Gastrocnemius medialis (tissue), 4 donors: ENCODE measurements at regions of chr3 and their contacts with region 1.

Region 1: GRCh38 chr3:11155341-11156025 is 1.2 kb downstream of the HRH1 start:
- DNase-seq: peak; percentile 19 to 48
- ATAC-seq: peak; percentile 68 to 80
- H3K4me3 ChIP-seq: peak overlapping the region; percentile 39 to 55 (median 51)
- H3K27ac ChIP-seq: peak overlapping the region in 1 of 4 donors; percentile 40
- H3K4me1 ChIP-seq: peaks cover 7 to 10% of the 10 kb centered on the region in 2 donors
- H3K27me3 ChIP-seq: peaks cover 23 to 33% (median 29%) of the 10 kb centered on the region in 3 donors
- CTCF ChIP-seq: peak; percentile 0 to 61 (median 53)
- POLR2A ChIP-seq: no peak

Region 2: GRCh38 chr3:11204697-11205348 is 49.3 kb after region 1 on chr3:
- in situ Hi-C with region 1: no loop called
- intact Hi-C with region 1: loop called (anchors 5 kb)
- DNase-seq: no peak
- ATAC-seq: no peak
- H3K4me3 ChIP-seq: no peak overlapping the region
- H3K27ac ChIP-seq: no peak overlapping the region
- H3K4me1 ChIP-seq: peaks cover 0 to 10% of the 10 kb centered on the region in 2 donors
- H3K27me3 ChIP-seq: no peaks in the 10 kb centered on the region
- CTCF ChIP-seq: no peak
- POLR2A ChIP-seq: no peak

Region 3: GRCh38 chr3:11221818-11222415 is 66.4 kb after region 1 on chr3:
- in situ Hi-C with region 1: no loop called
- intact Hi-C with region 1: loop called (anchors 1 kb)
- DNase-seq: no peak
- ATAC-seq: no peak
- H3K4me3 ChIP-seq: no peak overlapping the region
- H3K27ac ChIP-seq: no peak overlapping the region
- H3K4me1 ChIP-seq: no peaks in the 10 kb centered on the region
- H3K27me3 ChIP-seq: no peaks in the 10 kb centered on the region
- CTCF ChIP-seq: no peak
- POLR2A ChIP-seq: no peak

Region 4: DNA sequence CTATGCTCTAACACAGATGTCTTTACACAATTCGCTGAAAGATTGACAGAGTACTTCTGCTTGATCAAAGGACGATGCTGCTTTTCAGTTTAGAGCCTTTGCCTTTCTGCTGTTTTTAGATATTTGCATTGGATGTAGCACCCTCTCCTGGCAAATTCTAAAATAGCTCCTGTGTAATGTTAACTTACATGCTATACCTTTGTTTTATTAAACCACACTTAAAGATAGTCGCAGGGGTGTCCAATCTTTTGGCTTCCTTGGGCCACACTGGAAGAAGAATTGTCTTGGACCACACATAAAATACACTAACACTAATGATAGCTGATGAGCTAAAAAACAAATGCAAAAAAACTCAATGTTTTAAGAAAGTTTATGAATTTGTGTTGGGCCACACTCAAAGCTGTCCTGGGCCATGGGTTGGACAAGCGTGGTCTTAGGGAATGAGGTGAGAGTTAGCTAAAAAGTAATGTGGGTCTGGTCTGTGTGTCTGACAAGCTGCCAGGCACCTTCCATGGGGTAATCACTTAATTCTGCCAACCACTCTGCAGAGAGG is 179.6 kb after region 1 on chr3:
- in situ Hi-C with region 1: no loop called
- intact Hi-C with region 1: loop called (anchors 1 kb)
- DNase-seq: no peak
- ATAC-seq: peak; percentile 47 to 77
- H3K4me3 ChIP-seq: no peak overlapping the region
- H3K27ac ChIP-seq: no peak overlapping the region
- H3K4me1 ChIP-seq: no peaks in the 10 kb centered on the region
- H3K27me3 ChIP-seq: no peaks in the 10 kb centered on the region
- CTCF ChIP-seq: peak; percentile 38 to 66 (median 56)
- POLR2A ChIP-seq: no peak